Activated T-helper 1 cell treated with anti-CD3 and anti-CD28 coated beads, Interleukin-12 subunit alpha, Interleukin-12 subunit beta, Interleukin-2, Interleukin-4 antibody, amounts not matched to agents 30 ng/mL and 10 ng/mL and 1 ng/mL, durations not matched to agents 14 hours and 24 hours and 36 hours (primary cell): ENCODE measurements at regions of chr6 and their contacts with region 1.

Region 1: DNA sequence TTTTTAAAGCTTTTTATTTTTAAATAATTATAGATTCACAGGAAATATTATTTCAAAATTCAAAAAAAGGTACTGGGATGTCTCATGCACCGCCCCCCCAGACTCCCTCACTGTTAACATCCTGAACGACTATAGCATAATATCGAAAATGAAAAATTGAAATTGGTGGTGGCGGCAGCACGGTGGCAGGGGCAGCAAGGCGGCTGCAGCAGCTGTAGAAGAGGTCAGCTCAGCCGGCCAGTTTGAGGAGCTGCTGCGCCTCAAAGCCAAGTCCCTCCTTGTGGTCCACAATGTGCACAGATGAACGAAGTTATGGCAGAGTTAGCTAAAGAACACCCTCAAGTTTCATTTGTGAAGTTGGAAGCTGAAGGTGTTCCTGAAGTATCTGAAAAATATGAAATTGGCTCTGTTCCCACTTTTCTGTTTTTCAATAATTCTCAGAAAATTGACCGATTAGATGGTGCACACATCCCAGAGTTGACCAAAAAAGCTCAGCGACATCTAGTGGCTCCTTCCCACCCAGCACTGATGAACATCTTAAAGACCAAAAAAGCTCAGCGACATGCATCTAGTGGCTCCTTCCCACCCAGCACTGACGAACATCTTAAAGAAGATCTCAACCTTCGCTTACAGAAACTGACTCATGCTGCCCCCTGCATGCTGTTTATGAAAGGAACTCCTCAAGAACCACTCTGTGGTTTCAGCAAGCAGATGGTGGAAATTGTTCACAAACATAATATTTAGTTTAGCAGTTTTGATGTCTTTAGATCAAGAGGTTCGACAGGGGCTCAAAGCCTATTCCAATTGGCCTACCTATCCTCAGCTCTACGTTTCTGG is 100.8 kb downstream of the FAM217A start:
- DNase-seq: peak; percentile 24
- H3K4me3 Mint-ChIP-seq: no peak overlapping the region
- H3K27ac Mint-ChIP-seq: no peak overlapping the region
- H3K4me1 Mint-ChIP-seq: peaks cover 8% of the 10 kb centered on the region
- H3K27me3 Mint-ChIP-seq: peaks cover 17% of the 10 kb centered on the region

Region 2: GRCh38 chr6:4008324-4009047 is 30.4 kb after region 1 on chr6:
- intact Hi-C with region 1: loop called (anchors 2 kb)
- DNase-seq: no peak
- H3K4me3 Mint-ChIP-seq: no peak overlapping the region
- H3K27ac Mint-ChIP-seq: no peak overlapping the region
- H3K4me1 Mint-ChIP-seq: peaks cover 59% of the 10 kb centered on the region
- H3K27me3 Mint-ChIP-seq: no peaks in the 10 kb centered on the region

Region 3: GRCh38 chr6:4135665-4136353 is 157.7 kb after region 1 on chr6:
- intact Hi-C with region 1: no loop called
- DNase-seq: peak; percentile 88
- H3K4me3 Mint-ChIP-seq: peak overlapping the region; percentile 83
- H3K27ac Mint-ChIP-seq: peak overlapping the region; percentile 80
- H3K4me1 Mint-ChIP-seq: peaks cover 27% of the 10 kb centered on the region
- H3K27me3 Mint-ChIP-seq: peaks cover 4% of the 10 kb centered on the region